Activated CD8-positive, alpha-beta T cell treated with anti-CD3 and anti-CD28 coated beads, Interleukin-2, amount 10 ng/mL, durations not matched to agents 7 days and 5 days (primary cell): ENCODE measurements at regions of chr12 and their contacts with region 1.

Region 1: GRCh38 chr12:110468212-110469048 is at the starts of genes FAM216A and GPN3:
- DNase-seq: peak; percentile 98
- ATAC-seq: peak; percentile 91
- H3K4me3 Mint-ChIP-seq: peak within 1 kb of the TSS; percentile 99
- H3K27ac Mint-ChIP-seq: peak within 1 kb of the TSS; percentile 94
- H3K4me1 Mint-ChIP-seq: peaks cover 28% of the 10 kb centered on the region
- H3K27me3 Mint-ChIP-seq: no peaks in the 10 kb centered on the region
- total RNA-seq, gene FAM216A: 20.5 to 22.9 TPM
- total RNA-seq, gene GPN3: 26.2 to 33.0 TPM

Region 2: DNA sequence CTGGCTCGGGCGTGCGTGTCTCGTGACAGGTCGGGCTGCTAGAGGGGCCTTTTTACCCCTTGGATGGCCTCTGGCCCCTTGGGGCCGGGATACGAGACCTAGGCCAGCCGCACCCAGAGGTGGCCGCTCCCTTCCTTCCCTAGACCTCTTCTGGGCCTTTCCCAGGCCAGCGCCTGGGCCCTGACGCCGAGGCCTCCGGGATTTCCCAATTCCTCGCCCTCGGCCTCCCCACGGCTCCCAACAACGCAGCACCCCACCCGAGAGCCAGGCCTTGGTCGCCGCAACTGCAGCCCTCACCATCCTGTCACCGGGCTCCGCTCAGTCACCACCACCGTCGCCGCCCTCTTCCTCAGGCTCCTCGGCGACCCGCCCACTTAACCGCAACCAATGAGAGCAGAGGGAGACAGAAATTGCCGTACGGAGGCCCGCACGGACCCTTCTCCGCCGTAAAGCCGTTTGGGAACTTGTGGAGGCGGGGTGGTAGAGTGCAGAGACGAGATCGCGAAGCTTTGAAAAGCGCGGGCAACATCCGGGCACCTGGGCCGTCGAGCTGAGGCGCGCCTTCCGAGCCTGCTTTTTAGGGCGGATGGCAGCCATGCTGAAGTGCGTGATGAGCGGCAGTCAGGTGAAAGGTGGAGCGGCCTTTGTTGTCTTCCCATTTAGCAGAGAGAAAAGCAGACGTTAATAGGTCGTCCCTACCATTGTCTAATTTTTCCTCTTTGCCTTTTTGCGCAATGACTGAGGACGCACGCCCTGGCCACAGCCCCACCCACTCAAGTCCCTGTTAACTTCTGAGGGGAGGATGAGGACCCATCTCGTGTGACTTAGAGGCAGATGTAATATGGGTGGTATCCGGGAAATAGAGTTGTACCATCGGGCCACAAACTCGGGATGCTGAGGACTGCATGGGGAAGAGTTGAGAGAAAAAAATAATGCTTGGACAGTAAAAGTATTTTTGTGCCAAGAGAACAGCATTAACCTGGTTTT is 33.6 kb after region 1 on chr12 and contains the starts of genes RAD9B and VPS29:
- CTCF ChIA-PET with region 1: interaction called, 70 read pairs
- POLR2A ChIA-PET with region 1: interaction called, 42 read pairs
- DNase-seq: peak; percentile 100
- ATAC-seq: peak; percentile 98
- H3K4me3 Mint-ChIP-seq: peak within 1 kb of the TSS; percentile 97
- H3K27ac Mint-ChIP-seq: peak within 1 kb of the TSS; percentile 99
- H3K4me1 Mint-ChIP-seq: peaks cover 40% of the 10 kb centered on the region
- H3K27me3 Mint-ChIP-seq: no peaks in the 10 kb centered on the region
- total RNA-seq, gene RAD9B: 0.68 to 2.3 TPM
- total RNA-seq, gene VPS29: 126 to 128 TPM

Region 3: DNA sequence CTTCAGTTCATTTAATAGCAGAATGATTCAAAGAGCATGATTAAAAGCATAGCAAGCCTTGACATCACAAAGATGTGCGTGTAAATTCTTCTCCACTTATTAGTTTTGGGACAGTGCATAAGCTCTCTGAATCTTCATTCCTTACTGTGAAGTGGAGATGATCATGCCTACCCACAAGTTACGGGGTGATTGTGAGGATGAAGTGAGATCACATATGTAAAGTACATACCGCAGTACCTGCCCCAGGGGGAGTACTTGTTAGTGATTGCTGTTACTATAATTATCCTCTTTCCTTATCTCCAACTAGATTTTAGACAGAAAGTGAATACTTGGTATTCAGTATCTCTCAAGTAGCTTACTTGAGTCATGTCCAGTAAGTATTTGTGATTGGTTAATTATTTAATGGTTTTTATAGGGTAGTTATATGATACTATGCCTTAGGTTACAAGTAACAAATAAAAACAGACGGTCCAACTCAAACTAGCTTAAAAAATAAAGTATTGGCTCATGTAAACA is 39.7 kb after region 1 on chr12:
- CTCF ChIA-PET with region 1: interaction called, 70 read pairs
- POLR2A ChIA-PET with region 1: interaction called, 42 read pairs
- DNase-seq: no peak
- ATAC-seq: no peak
- H3K4me3 Mint-ChIP-seq: no peak overlapping the region
- H3K27ac Mint-ChIP-seq: no peak overlapping the region
- H3K4me1 Mint-ChIP-seq: peaks cover 4% of the 10 kb centered on the region
- H3K27me3 Mint-ChIP-seq: peaks cover 9% of the 10 kb centered on the region

Region 4: GRCh38 chr12:110531741-110532333 is 63.4 kb after region 1 on chr12:
- CTCF ChIA-PET with region 1: interaction called, 10 read pairs
- POLR2A ChIA-PET with region 1: interaction called, 3 read pairs
- DNase-seq: no peak
- ATAC-seq: no peak
- H3K4me3 Mint-ChIP-seq: no peak overlapping the region
- H3K27ac Mint-ChIP-seq: no peak overlapping the region
- H3K4me1 Mint-ChIP-seq: peaks cover 19% of the 10 kb centered on the region
- H3K27me3 Mint-ChIP-seq: no peaks in the 10 kb centered on the region

Region 5: DNA sequence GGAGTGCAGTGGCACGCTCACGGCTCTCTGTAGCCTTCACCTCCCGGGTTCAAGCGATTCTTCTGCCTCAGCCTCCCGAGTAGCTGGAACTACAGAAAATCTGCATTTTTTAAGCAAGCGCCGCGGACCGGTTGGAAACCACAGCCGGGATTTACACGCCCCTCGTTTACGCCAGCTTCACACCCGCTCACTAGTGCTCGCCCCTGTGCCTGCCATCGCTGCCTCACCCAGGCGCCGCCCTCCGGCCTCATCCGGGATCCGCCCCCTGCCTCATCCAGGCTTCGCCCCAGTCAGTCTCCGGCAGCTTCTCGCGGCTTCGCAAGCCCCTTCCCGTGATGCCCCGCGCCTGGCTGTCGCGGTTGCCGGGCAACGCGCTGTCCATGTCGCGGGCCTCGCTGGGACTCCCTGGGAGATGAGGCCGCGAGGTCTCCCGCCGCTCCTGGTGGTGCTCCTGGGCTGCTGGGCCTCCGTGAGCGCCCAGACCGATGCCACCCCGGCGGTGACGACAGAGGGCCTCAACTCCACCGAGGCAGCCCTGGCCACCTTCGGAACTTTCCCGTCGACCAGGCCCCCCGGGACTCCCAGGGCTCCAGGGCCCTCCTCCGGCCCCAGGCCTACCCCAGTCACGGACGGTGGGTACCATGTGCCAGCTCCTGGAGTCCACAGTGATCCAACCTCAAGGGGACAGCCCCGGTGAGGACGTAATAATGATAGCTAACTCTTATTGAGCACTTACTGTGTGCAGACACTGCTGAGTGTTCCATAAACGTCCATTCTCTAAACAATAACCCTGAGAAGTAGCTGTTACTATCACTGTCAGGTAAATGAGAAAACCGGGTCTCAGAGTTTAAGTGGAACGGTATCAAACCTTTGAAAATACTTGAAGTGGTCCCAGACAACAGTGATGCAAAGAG is 145.6 kb after region 1 on chr12 and contains the start of gene TCTN1:
- CTCF ChIA-PET with region 1: interaction called, 10 read pairs
- POLR2A ChIA-PET with region 1: interaction called, 3 read pairs
- DNase-seq: peak; percentile 99
- ATAC-seq: peak; percentile 100
- H3K4me3 Mint-ChIP-seq: peak within 1 kb of the TSS; percentile 83
- H3K27ac Mint-ChIP-seq: peak within 1 kb of the TSS; percentile 92
- H3K4me1 Mint-ChIP-seq: peaks cover 17% of the 10 kb centered on the region
- H3K27me3 Mint-ChIP-seq: no peaks in the 10 kb centered on the region
- total RNA-seq, gene TCTN1: 5.9 to 7.9 TPM

Region 6: GRCh38 chr12:110760204-110760609 is 291.8 kb after region 1 on chr12:
- CTCF ChIA-PET with region 1: no interaction called
- POLR2A ChIA-PET with region 1: no interaction called
- DNase-seq: no peak
- ATAC-seq: no peak
- H3K4me3 Mint-ChIP-seq: no peak overlapping the region
- H3K27ac Mint-ChIP-seq: no peak overlapping the region
- H3K4me1 Mint-ChIP-seq: no peaks in the 10 kb centered on the region
- H3K27me3 Mint-ChIP-seq: no peaks in the 10 kb centered on the region

Region 7: GRCh38 chr12:110966081-110966760 is 497.8 kb after region 1 on chr12:
- CTCF ChIA-PET with region 1: no interaction called
- POLR2A ChIA-PET with region 1: no interaction called
- DNase-seq: no peak
- ATAC-seq: no peak
- H3K4me3 Mint-ChIP-seq: no peak overlapping the region
- H3K27ac Mint-ChIP-seq: no peak overlapping the region
- H3K4me1 Mint-ChIP-seq: no peaks in the 10 kb centered on the region
- H3K27me3 Mint-ChIP-seq: peaks cover 10% of the 10 kb centered on the region